ENCODE measurements at regions of chr14 and their contacts with region 1.

Region 1: DNA sequence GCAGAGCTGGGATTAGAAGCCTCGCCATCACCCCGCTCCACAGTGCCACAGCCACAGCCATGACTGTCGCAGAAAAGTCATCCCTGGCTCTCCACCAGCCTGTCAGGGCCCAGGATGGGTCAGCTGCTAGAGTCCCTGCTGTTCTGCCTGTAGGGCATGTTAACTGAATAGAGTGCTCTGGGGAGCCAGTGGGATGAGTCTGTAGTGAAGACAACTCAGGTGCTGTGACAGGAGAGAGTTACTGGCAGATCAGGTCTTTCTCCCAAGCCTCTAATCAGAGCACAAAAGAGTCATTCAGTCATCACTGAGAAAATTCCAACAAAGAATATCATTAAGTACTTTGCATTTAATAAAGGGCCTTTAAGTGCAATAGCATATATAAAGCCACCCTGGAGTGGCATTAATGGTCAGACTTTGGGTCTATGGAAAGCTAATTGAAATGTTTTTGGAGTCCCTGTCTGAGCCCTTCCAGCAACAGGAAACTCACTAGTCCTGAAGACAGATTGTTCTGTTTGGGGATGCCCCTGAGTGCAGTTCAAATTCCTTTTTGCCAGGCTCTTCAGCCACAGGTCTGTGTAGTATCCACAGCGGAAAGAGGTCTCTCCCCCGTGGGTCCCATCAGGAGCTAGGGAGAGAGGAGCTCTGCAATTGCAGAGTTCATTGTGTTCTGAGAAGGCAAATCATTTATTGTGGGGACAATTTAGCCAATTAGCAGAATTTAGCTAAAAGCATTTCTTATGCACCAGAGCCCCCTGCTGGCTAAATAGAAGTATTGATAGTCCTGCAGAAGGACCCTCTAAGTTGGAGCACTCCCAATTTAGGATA is 45.2 kb upstream of the C14orf132 start:
- DNase-seq: peak; percentile 69
- H3K4me3 Mint-ChIP-seq: no peak overlapping the region
- H3K27ac Mint-ChIP-seq: no peak overlapping the region
- H3K4me1 Mint-ChIP-seq: no peaks in the 10 kb centered on the region
- H3K27me3 Mint-ChIP-seq: peaks cover 76% of the 10 kb centered on the region
- CTCF ChIP-seq: peak; percentile 95

Region 2: DNA sequence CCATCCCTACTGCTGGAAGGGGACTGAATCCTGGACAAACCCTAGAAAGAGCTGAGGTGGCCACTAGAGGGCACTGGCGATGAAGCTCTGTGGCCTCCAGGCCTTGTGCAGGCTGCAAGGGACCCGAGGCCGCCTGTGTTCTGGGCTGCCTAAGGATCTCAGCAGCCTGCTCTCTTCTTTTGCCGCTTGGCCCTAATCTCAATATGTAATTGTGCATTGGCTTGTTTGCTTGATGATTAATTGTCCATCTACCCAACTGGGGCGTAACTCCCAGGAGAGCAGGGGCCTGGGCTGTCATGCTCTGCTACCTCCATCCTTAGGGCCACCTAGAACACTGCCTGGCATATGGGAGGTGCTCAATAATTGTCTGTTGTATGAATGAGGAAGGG is 551.4 kb before region 1 on chr14:
- CTCF ChIA-PET with region 1: interaction called, 4 read pairs
- POLR2A ChIA-PET with region 1: interaction called, 8 read pairs
- intact Hi-C with region 1: loop called (anchors 2 kb)
- DNase-seq: peak; percentile 83
- H3K4me3 Mint-ChIP-seq: no peak overlapping the region
- H3K27ac Mint-ChIP-seq: no peak overlapping the region
- H3K4me1 Mint-ChIP-seq: no peaks in the 10 kb centered on the region
- H3K27me3 Mint-ChIP-seq: no peaks in the 10 kb centered on the region
- CTCF ChIP-seq: peak; percentile 85

Region 3: GRCh38 chr14:95609387-95609990 is 384.5 kb before region 1 on chr14:
- CTCF ChIA-PET with region 1: interaction called, 9 read pairs
- POLR2A ChIA-PET with region 1: no interaction called
- intact Hi-C with region 1: loop called (anchors 1 kb)
- DNase-seq: peak; percentile 70
- H3K4me3 Mint-ChIP-seq: no peak overlapping the region
- H3K27ac Mint-ChIP-seq: no peak overlapping the region
- H3K4me1 Mint-ChIP-seq: no peaks in the 10 kb centered on the region
- H3K27me3 Mint-ChIP-seq: peaks cover 84% of the 10 kb centered on the region
- CTCF ChIP-seq: peak; percentile 77

Region 4: DNA sequence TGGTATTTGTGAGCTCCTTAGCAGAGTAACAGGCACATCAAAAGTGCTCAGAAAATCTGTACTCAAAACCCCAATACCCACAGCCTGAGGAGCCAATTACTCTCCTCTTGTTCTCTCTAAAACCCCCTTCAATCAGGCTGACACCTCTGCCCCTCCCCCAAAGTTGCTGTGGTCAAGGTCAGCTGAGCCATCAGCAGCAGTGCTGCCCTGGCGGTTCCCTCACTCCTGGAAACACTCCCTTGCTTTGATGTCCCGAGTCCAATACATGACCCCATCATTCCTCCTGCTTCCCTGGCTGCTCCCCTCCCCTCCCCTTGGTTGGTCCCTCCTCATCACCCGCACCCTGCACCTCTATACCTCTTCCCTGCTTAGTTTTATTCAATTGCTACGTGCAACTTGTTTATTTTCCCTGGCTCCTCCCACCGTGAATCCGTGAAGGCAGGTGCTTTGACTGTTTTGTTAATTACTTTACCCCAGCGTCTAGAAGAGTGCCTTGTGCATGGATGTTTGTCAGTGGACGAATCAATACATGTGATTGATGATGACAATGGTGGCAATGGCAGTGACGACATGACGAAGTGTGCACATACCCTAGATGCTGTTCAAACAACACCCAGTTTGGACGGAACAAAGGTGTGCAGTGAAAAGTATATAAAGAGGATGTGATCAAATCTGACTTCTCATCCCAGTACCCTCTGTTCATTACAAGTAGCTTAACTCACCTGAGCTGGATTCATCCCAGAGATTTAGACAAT is 11.8 kb before region 1 on chr14:
- CTCF ChIA-PET with region 1: interaction called, 16 read pairs
- POLR2A ChIA-PET with region 1: interaction called, 3 read pairs
- intact Hi-C with region 1: no loop called
- DNase-seq: no peak
- H3K4me3 Mint-ChIP-seq: no peak overlapping the region
- H3K27ac Mint-ChIP-seq: no peak overlapping the region
- H3K4me1 Mint-ChIP-seq: no peaks in the 10 kb centered on the region
- H3K27me3 Mint-ChIP-seq: peaks cover 56% of the 10 kb centered on the region
- CTCF ChIP-seq: no peak

Region 5: GRCh38 chr14:96275177-96276112 is 281.5 kb after region 1 on chr14:
- CTCF ChIA-PET with region 1: interaction called, 47 read pairs
- POLR2A ChIA-PET with region 1: no interaction called
- intact Hi-C with region 1: loop called (anchors 1 kb)
- DNase-seq: peak; percentile 70
- H3K4me3 Mint-ChIP-seq: no peak overlapping the region
- H3K27ac Mint-ChIP-seq: no peak overlapping the region
- H3K4me1 Mint-ChIP-seq: peaks cover 11% of the 10 kb centered on the region
- H3K27me3 Mint-ChIP-seq: no peaks in the 10 kb centered on the region
- CTCF ChIP-seq: peak; percentile 94